RWPE1 (cell line): ENCODE measurements at regions of chr7 and their contacts with region 1.

Region 1: DNA sequence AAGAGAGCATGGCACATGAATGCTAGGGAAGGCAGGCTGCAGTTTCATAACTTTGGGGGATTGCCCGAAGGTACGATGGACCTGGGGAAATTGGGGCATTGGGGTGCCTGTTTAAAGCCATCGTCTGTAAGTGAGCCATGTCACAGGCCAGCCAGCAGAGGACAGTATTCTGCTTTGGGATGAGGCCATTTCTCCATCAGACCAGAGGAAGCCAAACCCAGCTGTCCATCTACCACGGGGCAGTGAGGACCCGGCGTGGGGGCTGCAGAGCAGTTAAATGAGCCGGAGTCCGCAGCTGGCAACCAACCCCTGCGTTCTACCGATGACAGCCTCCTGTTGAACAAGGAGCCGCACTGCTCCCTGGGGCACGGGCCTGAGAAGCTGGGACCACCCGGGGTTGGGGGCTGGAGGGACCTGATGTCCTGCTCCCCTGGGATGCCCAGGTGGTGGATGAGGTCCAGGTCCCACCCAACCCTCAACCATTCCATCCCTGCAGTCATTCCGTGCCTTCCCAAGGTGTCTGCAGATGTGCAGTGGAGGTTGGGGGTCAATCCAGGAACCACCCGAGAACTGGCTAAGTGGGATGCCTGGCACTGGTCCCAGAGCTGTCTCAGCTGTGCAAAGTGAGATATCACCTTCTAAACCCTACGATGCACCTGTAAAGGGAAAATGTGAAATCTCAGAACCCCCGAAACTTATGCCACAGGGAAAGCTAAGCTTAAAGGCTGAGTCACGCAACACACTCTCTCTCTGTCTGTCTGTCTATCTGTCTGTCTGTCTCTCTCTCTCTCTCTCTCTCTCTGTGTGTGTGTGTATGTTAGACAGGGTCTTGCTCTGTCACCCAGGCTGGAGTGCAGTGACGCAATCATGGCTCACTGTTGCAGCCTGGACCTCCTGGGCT is 12.1 kb upstream of the RHBDD2 start:
- DNase-seq: peak; percentile 63
- H3K27ac ChIP-seq: no peak overlapping the region
- CTCF ChIP-seq: peak; percentile 85

Region 2: DNA sequence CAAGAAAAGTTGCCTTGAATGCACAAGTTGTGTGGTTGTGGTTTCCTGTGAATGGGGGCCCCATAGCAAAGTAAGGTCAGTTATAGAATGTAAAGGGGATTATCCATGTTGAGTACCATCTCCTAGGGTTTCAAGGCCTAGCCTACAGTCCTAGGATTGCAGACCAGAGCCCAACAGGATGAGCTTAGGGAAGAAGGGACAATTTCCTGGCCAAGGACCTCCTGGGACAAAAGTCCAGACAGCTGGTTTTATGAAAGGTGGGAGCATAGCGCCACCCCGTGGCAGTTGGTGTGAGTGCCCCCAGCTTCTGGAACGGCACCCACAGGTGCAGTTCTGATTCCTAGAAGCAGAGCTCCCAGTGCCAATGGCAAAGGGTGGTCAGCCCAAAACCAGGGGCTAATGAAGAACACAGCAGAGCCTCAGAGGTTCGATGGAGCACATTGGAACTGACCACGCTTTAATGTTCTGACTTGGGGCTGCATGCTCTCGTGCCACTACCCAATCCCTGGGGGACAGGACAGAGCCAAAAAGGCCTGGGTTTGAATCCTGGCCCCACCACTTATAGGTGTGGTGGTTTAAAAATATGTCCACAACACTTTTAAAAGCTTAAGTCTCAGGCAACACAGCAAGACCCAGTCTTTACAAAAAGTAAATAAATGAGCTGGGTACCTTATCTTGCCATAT is 153.4 kb after region 1 on chr7:
- CTCF ChIA-PET with region 1: interaction called, 15 read pairs
- POLR2A ChIA-PET with region 1: no interaction called
- DNase-seq: peak; percentile 63
- H3K27ac ChIP-seq: no peak overlapping the region
- CTCF ChIP-seq: peak; percentile 89